PC-9 (cell line): ENCODE measurements at regions of chr12 and their contacts with region 1.

Region 1: DNA sequence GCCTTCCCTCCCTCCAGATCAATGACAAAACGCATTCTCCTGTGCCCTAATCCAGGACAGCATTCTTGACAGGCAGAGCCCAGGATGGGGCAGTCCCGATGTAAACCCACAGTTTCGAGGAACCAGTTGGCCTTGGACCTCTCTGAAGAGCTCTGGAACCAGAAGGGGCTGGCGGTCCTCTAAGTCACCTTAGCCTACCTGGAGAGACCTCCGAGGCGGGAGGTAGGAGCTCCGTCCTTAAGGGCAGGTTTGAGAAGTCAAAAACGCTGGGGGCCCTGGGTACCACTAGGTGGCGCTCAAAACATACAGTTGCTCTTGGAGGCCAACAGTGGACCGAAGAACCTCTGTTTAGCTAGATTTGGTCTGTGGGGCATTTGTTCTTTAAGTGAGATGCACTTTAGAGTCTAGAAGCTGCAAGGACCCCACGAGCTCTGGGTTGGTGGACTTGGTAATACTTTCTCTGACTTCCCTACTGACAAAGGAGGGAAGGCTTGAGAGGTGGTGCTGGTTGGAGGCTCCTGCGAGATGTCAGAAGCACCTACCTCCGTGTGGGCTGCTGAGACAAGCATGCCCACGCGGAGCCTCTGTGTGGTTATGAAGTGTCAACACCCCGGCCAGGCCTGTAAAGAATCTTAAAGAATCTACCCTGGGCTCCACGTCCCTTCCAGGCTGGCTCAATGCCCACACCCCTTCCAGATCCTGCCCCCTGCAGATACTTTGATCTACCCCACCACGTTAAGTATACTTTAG is 74.8 kb upstream of the CHST11 start:
- DNase-seq: peak; percentile 70 to 73
- H3K4me3 ChIP-seq: no peak overlapping the region
- H3K27ac ChIP-seq: no peak overlapping the region
- H3K4me1 ChIP-seq: peaks cover 20% of the 10 kb centered on the region
- H3K27me3 ChIP-seq: no peaks in the 10 kb centered on the region
- CTCF ChIP-seq: peak; percentile 98

Region 2: GRCh38 chr12:103751171-103751570 is 630.7 kb before region 1 on chr12:
- CTCF ChIA-PET with region 1: no interaction called
- POLR2A ChIA-PET with region 1: no interaction called
- intact Hi-C with region 1: no loop called
- DNase-seq: no peak
- H3K4me3 ChIP-seq: no peak overlapping the region
- H3K27ac ChIP-seq: no peak overlapping the region
- H3K4me1 ChIP-seq: peaks cover 20% of the 10 kb centered on the region
- H3K27me3 ChIP-seq: no peaks in the 10 kb centered on the region
- CTCF ChIP-seq: no peak

Region 3: GRCh38 chr12:103965590-103966504 is 416.1 kb before region 1 on chr12 and contains the start of gene TDG:
- CTCF ChIA-PET with region 1: no interaction called
- POLR2A ChIA-PET with region 1: no interaction called
- intact Hi-C with region 1: no loop called
- DNase-seq: peak; percentile 95
- H3K4me3 ChIP-seq: peak within 1 kb of the TSS; percentile 89
- H3K27ac ChIP-seq: peak within 1 kb of the TSS; percentile 80
- H3K4me1 ChIP-seq: peaks cover 40% of the 10 kb centered on the region
- H3K27me3 ChIP-seq: no peaks in the 10 kb centered on the region
- CTCF ChIP-seq: no peak; the same call in 1 of the 2 replicates
- total RNA-seq, gene TDG: 17.9 and 21.0 TPM in 2 replicates

Region 4: GRCh38 chr12:104201238-104202001 is 180.5 kb before region 1 on chr12:
- CTCF ChIA-PET with region 1: interaction called, 4 read pairs
- POLR2A ChIA-PET with region 1: interaction called, 17 read pairs
- intact Hi-C with region 1: no loop called
- DNase-seq: peak; percentile 40 to 49
- H3K4me3 ChIP-seq: no peak overlapping the region
- H3K27ac ChIP-seq: no peak overlapping the region
- H3K4me1 ChIP-seq: peaks cover 9% of the 10 kb centered on the region; the same call in 1 of the 2 replicates
- H3K27me3 ChIP-seq: no peaks in the 10 kb centered on the region
- CTCF ChIP-seq: peak; percentile 92

Region 5: GRCh38 chr12:104456417-104456949 is 74.6 kb after region 1 on chr12 and contains the start of gene CHST11:
- CTCF ChIA-PET with region 1: no interaction called
- POLR2A ChIA-PET with region 1: no interaction called
- intact Hi-C with region 1: loop called (anchors 2 kb)
- DNase-seq: peak; percentile 59 to 84
- H3K4me3 ChIP-seq: peak within 1 kb of the TSS; percentile 89
- H3K27ac ChIP-seq: peak within 1 kb of the TSS; percentile 58
- H3K4me1 ChIP-seq: peaks cover 41% of the 10 kb centered on the region
- H3K27me3 ChIP-seq: no peaks in the 10 kb centered on the region
- CTCF ChIP-seq: no peak
- total RNA-seq, gene CHST11: 39.9 and 52.2 TPM in 2 replicates

Region 6: GRCh38 chr12:104604070-104604994 is 222.4 kb after region 1 on chr12:
- CTCF ChIA-PET with region 1: no interaction called
- POLR2A ChIA-PET with region 1: no interaction called
- intact Hi-C with region 1: loop called (anchors 5 kb)
- DNase-seq: peak; percentile 77 to 90
- H3K4me3 ChIP-seq: peak overlapping the region; percentile 45; the same call in 1 of the 2 replicates
- H3K27ac ChIP-seq: peak overlapping the region; percentile 95
- H3K4me1 ChIP-seq: peaks cover 80% of the 10 kb centered on the region
- H3K27me3 ChIP-seq: no peaks in the 10 kb centered on the region
- CTCF ChIP-seq: no peak

Region 7: GRCh38 chr12:104910196-104910840 is 528.4 kb after region 1 on chr12:
- CTCF ChIA-PET with region 1: no interaction called
- POLR2A ChIA-PET with region 1: no interaction called
- intact Hi-C with region 1: no loop called
- DNase-seq: no peak
- H3K4me3 ChIP-seq: no peak overlapping the region
- H3K27ac ChIP-seq: no peak overlapping the region
- H3K4me1 ChIP-seq: no peaks in the 10 kb centered on the region
- H3K27me3 ChIP-seq: no peaks in the 10 kb centered on the region
- CTCF ChIP-seq: no peak

Region 8: DNA sequence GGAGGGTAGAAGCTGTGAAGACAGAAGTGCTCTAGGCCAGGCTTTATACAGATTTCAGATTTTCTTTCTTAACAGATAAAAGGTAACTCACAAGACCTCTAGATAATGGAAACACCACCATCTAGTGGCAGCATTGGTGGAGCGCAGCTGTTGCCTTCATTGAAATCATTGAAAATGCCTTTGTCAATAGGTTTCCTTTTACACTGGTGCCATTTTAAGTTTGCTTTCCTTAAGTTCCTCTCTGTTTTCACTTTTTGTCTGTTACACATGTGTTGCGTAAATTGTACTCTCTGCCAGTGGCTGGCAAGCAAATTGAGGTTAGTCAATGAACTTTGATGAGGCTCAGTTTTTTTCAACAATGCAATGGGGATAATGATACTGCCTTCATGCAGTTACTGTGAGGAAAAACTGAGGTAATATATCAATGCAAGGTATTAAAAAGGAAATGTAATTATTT is 671.2 kb after region 1 on chr12:
- CTCF ChIA-PET with region 1: no interaction called
- POLR2A ChIA-PET with region 1: interaction called, 11 read pairs
- intact Hi-C with region 1: loop called (anchors 2 kb)
- DNase-seq: peak; percentile 65 to 70
- H3K4me3 ChIP-seq: no peak overlapping the region
- H3K27ac ChIP-seq: no peak overlapping the region
- H3K4me1 ChIP-seq: no peaks in the 10 kb centered on the region
- H3K27me3 ChIP-seq: no peaks in the 10 kb centered on the region
- CTCF ChIP-seq: peak; percentile 92